CD4-positive, alpha-beta memory T cell (primary cell): ENCODE measurements at regions of chr14 and their contacts with region 1.

Region 1: DNA sequence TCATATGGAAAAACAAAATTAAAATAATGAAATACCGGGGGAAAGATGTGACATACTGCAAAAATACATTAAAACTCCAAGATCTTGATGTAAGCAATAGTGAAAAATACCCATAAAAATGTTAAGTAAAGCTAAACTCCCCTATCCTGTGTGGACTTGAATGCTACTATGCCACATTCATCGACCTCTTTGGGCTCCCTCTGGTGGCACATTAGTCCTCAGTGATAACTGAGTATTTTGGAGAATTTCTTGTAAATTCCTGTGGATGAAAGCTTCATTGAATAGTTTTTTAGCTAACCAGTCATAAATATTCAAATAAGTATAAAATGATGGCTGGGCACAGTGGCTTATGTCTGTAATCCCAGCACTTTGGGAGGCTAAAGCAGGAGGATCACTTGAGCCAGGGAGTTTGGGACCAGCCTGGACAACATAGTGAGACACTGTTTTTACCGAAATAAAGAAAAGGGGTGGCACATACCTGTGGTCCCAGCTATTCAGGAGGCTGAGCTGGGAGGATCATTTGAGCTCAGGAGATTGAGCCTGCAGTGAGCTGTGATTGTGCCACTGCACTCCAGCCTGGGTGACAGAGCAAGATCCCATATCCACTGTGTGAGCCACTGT is 42.4 kb upstream of the SGPP1 start:
- DNase-seq: peak; percentile 59 to 63 (median 60)
- H3K4me3 ChIP-seq: no peak overlapping the region
- H3K4me3 Mint-ChIP-seq: no peak overlapping the region
- H3K27ac ChIP-seq: no peak overlapping the region
- H3K27ac Mint-ChIP-seq: no peak overlapping the region
- H3K4me1 ChIP-seq: no peaks in the 10 kb centered on the region
- H3K4me1 Mint-ChIP-seq: peaks cover 3 to 5% (median 4%) of the 10 kb centered on the region in 4 donors
- H3K27me3 ChIP-seq: no peaks in the 10 kb centered on the region
- H3K27me3 Mint-ChIP-seq: no peaks in the 10 kb centered on the region

Region 2: DNA sequence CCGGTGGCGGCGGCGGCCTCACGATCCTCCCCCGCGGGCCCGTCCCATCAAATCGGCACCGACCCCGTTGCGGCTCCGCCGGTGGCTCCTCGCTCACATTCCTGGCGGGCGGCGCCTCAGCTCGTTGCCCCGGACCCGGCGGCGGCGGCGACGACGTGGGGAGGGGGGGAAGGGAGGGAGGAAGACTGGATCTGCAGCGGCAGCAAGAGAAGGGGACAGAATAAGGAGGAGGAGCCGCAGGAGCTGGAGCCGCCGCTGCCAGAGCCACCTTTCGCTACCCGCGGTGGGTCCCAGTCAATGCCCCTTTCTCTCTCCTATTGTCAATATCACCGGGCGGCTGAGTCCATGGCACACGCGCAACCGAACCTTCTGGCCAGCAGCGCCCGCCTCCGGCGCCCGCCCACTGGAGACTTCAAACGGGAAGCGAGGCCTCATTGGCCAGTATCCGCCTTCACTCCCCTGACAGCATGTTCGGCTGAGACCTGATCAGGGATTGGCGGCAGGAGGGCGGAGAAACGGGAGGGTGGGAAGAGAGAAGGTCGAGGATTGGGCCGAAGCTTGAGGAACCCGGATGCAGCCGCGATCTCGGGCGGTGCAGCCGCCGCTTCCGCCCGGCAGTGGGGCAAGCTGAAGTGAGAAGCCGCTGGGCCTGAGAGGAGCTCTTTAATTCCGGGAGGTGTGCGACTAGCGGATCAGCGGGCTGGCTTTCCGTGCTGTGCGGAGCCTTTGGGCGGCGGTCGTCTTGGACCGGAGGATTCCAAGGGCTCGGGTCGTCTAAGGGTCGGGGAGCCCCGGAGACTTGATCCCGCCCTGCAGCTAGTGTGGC is 227.1 kb before region 1 on chr14 and contains the start of gene PPP2R5E:
- CTCF ChIA-PET with region 1: interaction called, 4 read pairs
- POLR2A ChIA-PET with region 1: interaction called, 5 read pairs
- intact Hi-C with region 1: loop called (anchors 10 kb)
- DNase-seq: peak; percentile 97 to 99 (median 98)
- H3K4me3 ChIP-seq: peak within 1 kb of the TSS; percentile 68 to 83
- H3K4me3 Mint-ChIP-seq: peak within 1 kb of the TSS; percentile 97 to 99 (median 98)
- H3K27ac ChIP-seq: peak within 1 kb of the TSS; percentile 91
- H3K27ac Mint-ChIP-seq: peak within 1 kb of the TSS; percentile 92 to 98 (median 97)
- H3K4me1 ChIP-seq: peaks cover 26% of the 10 kb centered on the region
- H3K4me1 Mint-ChIP-seq: peaks cover 26 to 48% (median 33%) of the 10 kb centered on the region in 4 donors
- H3K27me3 ChIP-seq: no peaks in the 10 kb centered on the region
- H3K27me3 Mint-ChIP-seq: peaks cover 0 to 1% of the 10 kb centered on the region in 2 donors
- total RNA-seq, gene PPP2R5E: 36.2 to 38.0 TPM

Region 3: DNA sequence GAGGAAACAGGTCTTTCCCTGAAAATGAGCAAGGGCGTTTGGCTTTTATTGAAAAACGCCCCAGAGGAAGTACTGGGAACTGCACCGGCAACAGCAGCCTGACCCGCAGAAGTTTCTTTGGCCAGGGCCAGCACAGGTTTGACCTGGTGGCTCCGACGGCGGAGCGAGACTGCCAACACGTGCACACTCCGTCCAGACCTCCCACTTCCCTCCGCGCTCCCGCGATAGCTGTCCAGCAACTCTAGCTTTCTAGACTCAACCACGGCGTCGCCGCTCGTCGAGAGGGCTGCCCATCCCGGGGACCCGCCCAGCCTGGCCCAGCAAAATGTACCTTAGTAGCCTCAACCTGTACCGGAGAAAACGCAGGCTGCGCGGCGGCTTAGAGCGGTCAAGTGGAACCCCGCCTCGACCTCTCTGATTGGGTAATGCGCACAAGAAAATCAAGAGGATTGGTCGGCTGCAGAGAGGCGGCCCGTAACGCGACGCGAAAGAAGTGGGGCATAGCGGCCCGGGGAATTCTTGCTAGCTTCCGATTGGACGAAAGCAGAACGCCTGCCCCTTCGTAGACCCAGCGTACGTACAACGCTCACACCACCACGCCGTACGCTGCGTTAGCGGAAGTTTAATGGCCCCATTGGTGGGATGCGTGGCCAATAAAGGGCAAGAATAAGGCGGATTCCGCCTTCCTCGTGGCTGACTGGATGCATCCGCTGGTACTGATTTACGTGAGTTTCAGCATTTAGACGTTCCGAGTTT is 128.6 kb before region 1 on chr14 and contains the start of gene WDR89:
- CTCF ChIA-PET with region 1: interaction called, 16 read pairs
- POLR2A ChIA-PET with region 1: interaction called, 8 read pairs
- intact Hi-C with region 1: loop called (anchors 2 kb)
- DNase-seq: peak; percentile 96 to 99 (median 98)
- H3K4me3 ChIP-seq: peak within 1 kb of the TSS; percentile 85 to 96
- H3K4me3 Mint-ChIP-seq: peak within 1 kb of the TSS; percentile 85 to 98 (median 92)
- H3K27ac ChIP-seq: peak within 1 kb of the TSS; percentile 99
- H3K27ac Mint-ChIP-seq: peak within 1 kb of the TSS; percentile 90 to 99 (median 97)
- H3K4me1 ChIP-seq: peaks cover 37% of the 10 kb centered on the region
- H3K4me1 Mint-ChIP-seq: peaks cover 22 to 49% (median 33%) of the 10 kb centered on the region in 4 donors
- H3K27me3 ChIP-seq: no peaks in the 10 kb centered on the region
- H3K27me3 Mint-ChIP-seq: no peaks in the 10 kb centered on the region
- total RNA-seq, gene WDR89: 32.8 to 36.3 TPM

Region 4: DNA sequence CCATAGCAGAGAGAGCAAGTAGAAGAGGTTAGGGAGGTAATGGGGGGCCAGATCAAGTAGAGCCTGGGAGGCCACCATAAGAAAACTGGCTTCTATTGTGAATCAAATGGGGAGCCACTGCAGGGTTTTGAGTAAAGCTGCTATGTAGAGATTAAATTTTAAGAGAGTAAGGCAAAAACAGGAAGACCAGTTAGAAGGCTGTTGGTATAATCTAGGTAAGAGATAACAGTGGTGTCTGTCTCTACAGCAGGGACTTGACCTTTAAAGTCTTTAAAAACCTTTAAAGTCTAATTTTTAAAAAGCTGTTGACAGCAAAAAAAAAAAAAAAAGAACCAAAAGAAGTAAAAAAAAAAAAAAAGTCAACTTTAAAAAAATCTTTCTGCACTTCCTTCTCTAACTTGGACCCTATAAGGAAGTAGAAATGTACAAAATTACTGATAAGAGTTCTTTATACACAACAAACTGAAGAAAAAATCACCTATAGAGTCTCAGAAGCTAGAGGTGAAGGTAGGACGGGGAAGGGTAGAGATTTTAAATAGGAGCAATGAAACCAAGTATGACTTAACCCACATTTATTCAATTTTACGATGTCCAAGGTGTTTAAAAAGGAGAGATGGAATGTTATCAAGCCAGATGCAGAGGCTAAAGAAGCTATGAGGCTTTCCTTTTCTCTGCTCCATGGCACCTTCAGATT is 68.5 kb before region 1 on chr14:
- CTCF ChIA-PET with region 1: no interaction called
- POLR2A ChIA-PET with region 1: no interaction called
- intact Hi-C with region 1: no loop called
- DNase-seq: no peak
- H3K4me3 ChIP-seq: no peak overlapping the region
- H3K4me3 Mint-ChIP-seq: no peak overlapping the region
- H3K27ac ChIP-seq: no peak overlapping the region
- H3K27ac Mint-ChIP-seq: peak overlapping the region in 1 of 7 donors; percentile 13
- H3K4me1 ChIP-seq: peaks cover 17% of the 10 kb centered on the region
- H3K4me1 Mint-ChIP-seq: peaks cover 24 to 40% (median 29%) of the 10 kb centered on the region in 4 donors
- H3K27me3 ChIP-seq: no peaks in the 10 kb centered on the region
- H3K27me3 Mint-ChIP-seq: no peaks in the 10 kb centered on the region

Region 5: DNA sequence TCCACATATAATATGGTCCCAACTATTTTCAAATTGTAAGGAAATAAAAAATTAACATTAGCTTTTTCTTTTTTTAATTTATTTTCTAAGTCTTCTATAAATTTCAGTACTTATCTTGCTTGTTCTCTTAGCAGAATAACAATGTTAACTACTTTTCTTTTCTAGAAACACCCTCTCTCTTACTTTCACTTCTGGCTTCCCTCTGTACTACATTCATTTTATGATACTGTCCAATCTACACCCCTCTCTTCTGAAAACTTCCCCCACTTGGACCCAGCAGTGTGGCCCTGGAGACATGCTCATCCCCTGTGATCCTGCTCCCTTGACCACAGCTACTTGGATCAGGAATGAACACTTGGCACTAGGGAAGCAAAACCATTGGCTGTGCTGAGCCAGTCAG is 58.2 kb before region 1 on chr14:
- CTCF ChIA-PET with region 1: interaction called, 12 read pairs
- POLR2A ChIA-PET with region 1: interaction called, 4 read pairs
- intact Hi-C with region 1: no loop called
- DNase-seq: no peak
- H3K4me3 ChIP-seq: no peak overlapping the region
- H3K4me3 Mint-ChIP-seq: peak overlapping the region in 6 of 8 donors; percentile 7 to 83 (median 74)
- H3K27ac ChIP-seq: no peak overlapping the region
- H3K27ac Mint-ChIP-seq: peak overlapping the region in 5 of 7 donors; percentile 2 to 43 (median 34)
- H3K4me1 ChIP-seq: peaks cover 24% of the 10 kb centered on the region
- H3K4me1 Mint-ChIP-seq: peaks cover 23 to 34% (median 28%) of the 10 kb centered on the region in 4 donors
- H3K27me3 ChIP-seq: no peaks in the 10 kb centered on the region
- H3K27me3 Mint-ChIP-seq: no peaks in the 10 kb centered on the region

Region 6: DNA sequence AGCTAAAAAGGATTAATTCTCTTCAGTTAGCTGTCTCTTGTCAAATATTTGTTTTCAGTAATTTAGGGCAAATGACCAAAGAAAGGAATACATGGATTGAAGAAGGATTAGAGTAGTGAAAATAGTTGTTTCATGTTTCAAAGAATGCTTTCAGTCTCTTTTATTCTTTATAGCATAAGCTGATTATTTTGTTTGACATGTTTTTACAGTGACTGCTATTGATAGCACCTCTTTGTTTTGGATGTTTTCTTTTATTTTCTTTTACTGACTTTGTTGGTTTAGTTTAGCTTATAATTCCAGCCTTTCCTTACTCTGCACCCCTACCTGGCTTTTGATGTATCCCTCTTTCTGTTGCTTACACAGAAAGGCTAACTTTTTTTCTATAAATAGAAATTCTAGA is 13.1 kb before region 1 on chr14:
- CTCF ChIA-PET with region 1: interaction called, 15 read pairs
- POLR2A ChIA-PET with region 1: interaction called, 3 read pairs
- intact Hi-C with region 1: no loop called
- DNase-seq: no peak
- H3K4me3 ChIP-seq: no peak overlapping the region
- H3K4me3 Mint-ChIP-seq: no peak overlapping the region
- H3K27ac ChIP-seq: no peak overlapping the region
- H3K27ac Mint-ChIP-seq: peak overlapping the region in 3 of 7 donors; percentile 18 to 75 (median 36)
- H3K4me1 ChIP-seq: peaks cover 14% of the 10 kb centered on the region
- H3K4me1 Mint-ChIP-seq: peaks cover 5 to 14% (median 11%) of the 10 kb centered on the region in 4 donors
- H3K27me3 ChIP-seq: no peaks in the 10 kb centered on the region
- H3K27me3 Mint-ChIP-seq: peaks cover 0 to 2% of the 10 kb centered on the region in 2 donors

Region 7: GRCh38 chr14:63840981-63841380 is 70.7 kb after region 1 on chr14:
- CTCF ChIA-PET with region 1: no interaction called
- POLR2A ChIA-PET with region 1: no interaction called
- intact Hi-C with region 1: no loop called
- DNase-seq: peak; percentile 61 to 72 (median 63)
- H3K4me3 ChIP-seq: no peak overlapping the region
- H3K4me3 Mint-ChIP-seq: no peak overlapping the region
- H3K27ac ChIP-seq: no peak overlapping the region
- H3K27ac Mint-ChIP-seq: peak overlapping the region in 1 of 7 donors; percentile 16
- H3K4me1 ChIP-seq: peaks cover 6% of the 10 kb centered on the region
- H3K4me1 Mint-ChIP-seq: peaks cover 0 to 4% (median 1%) of the 10 kb centered on the region in 4 donors
- H3K27me3 ChIP-seq: no peaks in the 10 kb centered on the region
- H3K27me3 Mint-ChIP-seq: no peaks in the 10 kb centered on the region